Uterus (tissue), 4 donors: ENCODE measurements at regions of chr17 and their contacts with region 1.

Region 1: DNA sequence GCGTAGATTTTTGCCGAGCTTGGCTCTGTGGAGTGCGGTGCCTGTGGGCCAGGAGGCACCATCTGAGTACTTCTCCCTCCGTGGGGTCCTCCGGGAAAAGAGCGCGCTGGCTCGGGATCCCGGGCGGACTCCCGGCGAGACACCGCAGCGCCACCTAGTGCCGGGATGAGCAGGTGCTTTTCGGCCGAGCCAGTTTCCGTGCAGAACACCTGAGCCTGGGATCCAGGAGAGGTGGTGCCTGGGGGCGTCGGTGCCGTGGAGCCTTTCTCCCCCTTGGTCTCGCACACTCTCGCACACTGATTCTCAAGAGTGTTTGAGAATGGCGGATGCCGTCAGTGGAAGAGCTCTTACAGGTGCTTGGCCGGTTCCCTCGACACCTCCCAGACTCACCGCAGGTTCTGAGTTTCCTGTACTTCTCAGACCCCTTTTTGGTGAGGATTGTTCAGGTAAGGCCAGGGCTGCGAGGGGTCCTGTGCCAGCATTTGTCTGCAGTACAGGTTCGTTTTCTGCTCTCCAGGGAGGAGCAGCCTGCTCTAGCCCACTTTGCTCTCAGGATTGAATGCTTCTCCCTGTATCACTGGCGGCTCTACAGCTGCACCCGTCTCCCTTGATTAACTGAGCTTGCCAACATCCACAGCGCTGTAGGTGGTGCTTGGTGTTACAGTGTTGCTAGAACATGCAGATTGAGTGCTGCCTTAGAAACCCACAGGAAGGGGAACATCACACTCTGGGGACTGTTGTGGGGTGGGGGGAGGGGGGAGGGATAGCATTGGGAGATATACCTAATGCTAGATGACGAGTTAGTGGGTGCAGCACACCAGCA is 23.3 kb downstream of the TBCD start:
- DNase-seq: peak; percentile 59 to 70
- H3K4me3 ChIP-seq: no peak overlapping the region
- H3K27ac ChIP-seq: no peak overlapping the region
- H3K4me1 ChIP-seq: no peaks in the 10 kb centered on the region
- H3K27me3 ChIP-seq: no peaks in the 10 kb centered on the region
- CTCF ChIP-seq: peak; percentile 77 to 89 (median 80)
- POLR2A ChIP-seq: no peak

Region 2: DNA sequence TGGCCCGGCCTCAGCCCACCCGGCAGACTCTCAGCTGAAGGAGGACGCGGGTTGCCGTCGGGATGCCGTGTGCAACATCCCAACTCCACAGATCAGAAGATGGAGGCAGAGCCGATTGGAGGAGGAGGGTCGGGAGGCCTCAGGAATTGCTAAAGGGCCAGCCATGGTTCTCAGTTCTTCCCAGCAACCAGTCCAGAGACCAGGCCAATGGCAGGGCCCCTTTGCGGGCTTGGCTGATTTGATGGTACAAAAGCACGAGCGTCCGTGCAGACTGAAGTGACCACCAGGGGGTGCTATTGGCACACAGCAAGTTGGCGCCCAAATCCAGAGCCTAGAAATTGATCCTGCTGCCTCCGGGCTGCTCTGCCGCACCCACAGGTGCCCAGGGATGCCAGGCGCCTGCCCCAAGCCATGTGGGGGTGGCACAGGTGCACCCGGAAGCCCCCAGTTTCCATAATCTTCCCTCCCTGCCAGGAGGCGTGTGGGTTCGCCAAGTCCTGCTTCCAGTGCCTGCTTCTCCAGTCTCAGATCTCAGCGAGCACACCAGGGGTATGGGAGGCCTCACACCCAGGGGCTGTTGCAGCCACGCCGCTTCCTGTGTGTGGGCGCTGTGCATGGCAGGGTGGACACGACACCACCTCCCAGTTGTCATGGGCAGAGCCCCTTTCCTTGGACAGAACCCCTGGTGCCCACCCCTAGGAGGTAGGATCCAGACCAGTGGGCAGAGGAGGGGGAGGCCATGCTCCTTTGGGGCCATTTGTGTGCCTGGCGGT is 423.3 kb before region 1 on chr17:
- intact Hi-C with region 1: loop called (anchors 10 kb)
- DNase-seq: peak; percentile 84 to 86
- H3K4me3 ChIP-seq: no peak overlapping the region
- H3K27ac ChIP-seq: no peak overlapping the region
- H3K4me1 ChIP-seq: no peaks in the 10 kb centered on the region
- H3K27me3 ChIP-seq: no peaks in the 10 kb centered on the region
- CTCF ChIP-seq: peak; percentile 90 to 97 (median 94)
- POLR2A ChIP-seq: no peak